CD4-positive, alpha-beta T cell (primary cell): ENCODE measurements at regions of chr4 and their contacts with region 1.

Region 1: GRCh38 chr4:26319467-26319948 is 1.3 kb upstream of the RBPJ start:
- DNase-seq: peak; percentile 93 to 100 (median 95)
- ATAC-seq: peak; percentile 65
- H3K4me3 ChIP-seq: peak overlapping the region; percentile 99
- H3K4me3 Mint-ChIP-seq: peak overlapping the region; percentile 100
- H3K27ac ChIP-seq: peak overlapping the region; percentile 84 to 96
- H3K27ac Mint-ChIP-seq: peak overlapping the region; percentile 99
- H3K4me1 ChIP-seq: peaks cover 36% of the 10 kb centered on the region
- H3K4me1 Mint-ChIP-seq: peaks cover 35% of the 10 kb centered on the region
- H3K27me3 ChIP-seq: no peaks in the 10 kb centered on the region
- H3K27me3 Mint-ChIP-seq: no peaks in the 10 kb centered on the region
- CTCF ChIP-seq: no peak

Region 2: DNA sequence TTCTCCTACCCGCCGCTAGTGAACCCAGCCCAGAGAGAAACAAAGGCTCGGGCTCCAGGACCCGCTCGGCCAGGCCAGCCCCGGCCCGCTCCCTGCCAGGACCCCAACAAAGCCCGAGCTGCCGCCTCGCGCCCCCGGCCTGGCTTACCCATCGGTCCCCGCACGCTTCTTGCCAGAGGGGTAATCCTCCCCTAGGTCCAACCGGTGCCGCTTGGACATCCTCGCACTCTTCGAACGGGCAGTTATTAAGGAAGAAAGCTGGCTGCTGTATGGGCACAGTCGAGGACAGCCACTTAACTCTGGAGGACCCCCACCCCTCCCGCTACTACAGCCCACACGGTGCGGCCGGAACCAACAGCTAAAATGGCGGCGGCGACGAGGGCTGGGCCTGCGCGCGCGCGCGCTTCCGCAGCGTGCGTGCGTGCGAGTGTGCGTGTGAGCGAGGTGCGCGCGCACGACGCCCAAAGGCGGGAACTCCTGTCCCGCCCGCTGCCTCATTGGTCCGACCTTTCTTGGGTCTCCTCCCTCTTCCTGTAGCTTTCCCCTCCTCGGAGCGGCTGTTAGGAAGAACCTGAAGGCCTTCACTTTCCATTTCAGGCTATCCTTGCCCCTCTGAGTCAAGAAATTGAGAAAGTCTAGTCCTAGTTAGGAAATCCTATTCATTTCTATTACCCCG is 1735.2 kb before region 1 on chr4 and contains the start of gene DHX15:
- CTCF ChIA-PET with region 1: no interaction called
- POLR2A ChIA-PET with region 1: interaction called, 4 read pairs
- intact Hi-C with region 1: loop called in 1 of 2 experiments (anchors 10 kb)
- DNase-seq: peak; percentile 83 to 99 (median 90)
- ATAC-seq: peak; percentile 93
- H3K4me3 ChIP-seq: peak within 1 kb of the TSS; percentile 95
- H3K4me3 Mint-ChIP-seq: peak within 1 kb of the TSS; percentile 96
- H3K27ac ChIP-seq: peak within 1 kb of the TSS; percentile 94 to 96
- H3K27ac Mint-ChIP-seq: peak within 1 kb of the TSS; percentile 86
- H3K4me1 ChIP-seq: peaks cover 28% of the 10 kb centered on the region
- H3K4me1 Mint-ChIP-seq: peaks cover 41% of the 10 kb centered on the region
- H3K27me3 ChIP-seq: no peaks in the 10 kb centered on the region
- H3K27me3 Mint-ChIP-seq: peaks cover 5% of the 10 kb centered on the region
- CTCF ChIP-seq: no peak
- total RNA-seq, gene DHX15: 208 to 209 TPM

Region 3: GRCh38 chr4:25312496-25313200 is 1006.9 kb before region 1 on chr4 and contains the start of gene ZCCHC4:
- CTCF ChIA-PET with region 1: interaction called, 6 read pairs
- POLR2A ChIA-PET with region 1: no interaction called
- intact Hi-C with region 1: loop called in 1 of 2 experiments (anchors 5 kb)
- DNase-seq: peak; percentile 79 to 96 (median 88)
- ATAC-seq: peak; percentile 99
- H3K4me3 ChIP-seq: peak within 1 kb of the TSS; percentile 70
- H3K4me3 Mint-ChIP-seq: peak within 1 kb of the TSS; percentile 97
- H3K27ac ChIP-seq: peak within 1 kb of the TSS; percentile 0 to 40
- H3K27ac Mint-ChIP-seq: peak within 1 kb of the TSS; percentile 90
- H3K4me1 ChIP-seq: peaks cover 13% of the 10 kb centered on the region
- H3K4me1 Mint-ChIP-seq: peaks cover 16% of the 10 kb centered on the region
- H3K27me3 ChIP-seq: peaks cover 0 to 3% of the 10 kb centered on the region in 2 experiments
- H3K27me3 Mint-ChIP-seq: peaks cover 14% of the 10 kb centered on the region
- CTCF ChIP-seq: peak; percentile 100
- total RNA-seq, gene ZCCHC4: 6.4 to 6.7 TPM

Region 4: GRCh38 chr4:25862411-25863346 is 456.8 kb before region 1 on chr4 and contains the start of gene SEL1L3:
- CTCF ChIA-PET with region 1: no interaction called
- POLR2A ChIA-PET with region 1: interaction called, 6 read pairs
- intact Hi-C with region 1: loop called in 1 of 2 experiments (anchors 10 kb)
- DNase-seq: peak in 12 of 14 experiments; percentile 30 to 74 (median 49)
- ATAC-seq: peak; percentile 38
- H3K4me3 ChIP-seq: peak within 1 kb of the TSS; percentile 76
- H3K4me3 Mint-ChIP-seq: peak within 1 kb of the TSS; percentile 95
- H3K27ac ChIP-seq: peak within 1 kb of the TSS; percentile 55 to 94
- H3K27ac Mint-ChIP-seq: peak within 1 kb of the TSS; percentile 89
- H3K4me1 ChIP-seq: peaks cover 44% of the 10 kb centered on the region
- H3K4me1 Mint-ChIP-seq: peaks cover 41% of the 10 kb centered on the region
- H3K27me3 ChIP-seq: no peaks in the 10 kb centered on the region
- H3K27me3 Mint-ChIP-seq: no peaks in the 10 kb centered on the region
- CTCF ChIP-seq: no peak
- total RNA-seq, gene SEL1L3: 34.9 to 36.5 TPM

Region 5: DNA sequence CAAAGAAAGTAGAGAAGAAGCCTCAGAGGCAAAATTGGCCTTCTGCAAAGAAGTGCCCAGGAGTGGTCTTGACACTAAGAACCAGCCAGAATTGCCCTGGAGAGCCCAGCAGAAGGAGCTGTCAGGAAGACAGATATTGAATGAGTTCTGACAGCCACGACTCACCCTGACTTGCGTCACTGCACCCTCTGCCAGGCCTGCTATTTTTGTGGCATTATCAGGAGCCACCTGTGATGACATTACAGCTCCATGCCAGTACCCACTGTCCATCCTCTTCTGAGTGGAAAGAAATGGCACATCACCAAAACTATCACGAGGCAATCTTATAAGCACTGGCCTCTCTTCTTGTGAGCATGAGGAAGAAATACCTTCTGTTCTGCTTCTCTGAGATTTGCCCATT is 337.8 kb before region 1 on chr4:
- CTCF ChIA-PET with region 1: no interaction called
- POLR2A ChIA-PET with region 1: no interaction called
- intact Hi-C with region 1: loop called in 1 of 2 experiments (anchors 10 kb)
- DNase-seq: no peak
- ATAC-seq: no peak
- H3K4me3 ChIP-seq: no peak overlapping the region
- H3K4me3 Mint-ChIP-seq: no peak overlapping the region
- H3K27ac ChIP-seq: no peak overlapping the region
- H3K27ac Mint-ChIP-seq: no peak overlapping the region
- H3K4me1 ChIP-seq: no peaks in the 10 kb centered on the region
- H3K4me1 Mint-ChIP-seq: no peaks in the 10 kb centered on the region
- H3K27me3 ChIP-seq: no peaks in the 10 kb centered on the region
- H3K27me3 Mint-ChIP-seq: no peaks in the 10 kb centered on the region
- CTCF ChIP-seq: no peak

Region 6: DNA sequence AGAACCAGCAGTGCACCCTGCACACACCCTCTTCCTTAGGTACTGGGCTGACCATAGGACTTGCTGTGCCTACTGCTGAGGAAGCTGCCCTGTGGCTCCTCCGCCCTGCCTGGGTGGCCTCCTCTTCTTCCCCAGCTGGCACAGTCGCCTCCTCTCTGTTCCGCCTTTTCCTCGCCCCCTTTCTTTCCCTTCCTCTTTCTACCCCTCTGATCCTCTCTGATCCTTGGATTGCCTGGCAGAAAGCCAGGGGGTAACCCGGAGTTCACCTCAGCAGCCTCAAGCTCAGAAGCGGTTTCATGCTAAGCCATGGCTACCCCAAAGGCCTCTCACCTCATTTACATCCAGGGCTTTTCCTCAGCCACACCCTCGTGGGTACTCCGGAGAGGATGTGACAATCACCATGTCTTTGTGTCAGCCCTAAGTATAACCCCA is 269.3 kb before region 1 on chr4:
- CTCF ChIA-PET with region 1: no interaction called
- POLR2A ChIA-PET with region 1: no interaction called
- intact Hi-C with region 1: no loop called
- DNase-seq: peak in 2 of 14 experiments; percentile 18 to 32
- ATAC-seq: no peak
- H3K4me3 ChIP-seq: no peak overlapping the region
- H3K4me3 Mint-ChIP-seq: no peak overlapping the region
- H3K27ac ChIP-seq: no peak overlapping the region
- H3K27ac Mint-ChIP-seq: no peak overlapping the region
- H3K4me1 ChIP-seq: no peaks in the 10 kb centered on the region
- H3K4me1 Mint-ChIP-seq: no peaks in the 10 kb centered on the region
- H3K27me3 ChIP-seq: no peaks in the 10 kb centered on the region
- H3K27me3 Mint-ChIP-seq: peaks cover 7% of the 10 kb centered on the region
- CTCF ChIP-seq: no peak

Region 7: GRCh38 chr4:26197018-26197779 is 122.3 kb before region 1 on chr4:
- CTCF ChIA-PET with region 1: no interaction called
- POLR2A ChIA-PET with region 1: interaction called, 22 read pairs
- intact Hi-C with region 1: loop called in 1 of 2 experiments (anchors 5 kb)
- DNase-seq: peak; percentile 11 to 89 (median 56)
- ATAC-seq: peak; percentile 82
- H3K4me3 ChIP-seq: peak overlapping the region; percentile 8
- H3K4me3 Mint-ChIP-seq: peak overlapping the region; percentile 57
- H3K27ac ChIP-seq: peak overlapping the region in 1 of 2 donors; percentile 18
- H3K27ac Mint-ChIP-seq: peak overlapping the region; percentile 73
- H3K4me1 ChIP-seq: peaks cover 41% of the 10 kb centered on the region
- H3K4me1 Mint-ChIP-seq: peaks cover 50% of the 10 kb centered on the region
- H3K27me3 ChIP-seq: no peaks in the 10 kb centered on the region
- H3K27me3 Mint-ChIP-seq: no peaks in the 10 kb centered on the region
- CTCF ChIP-seq: no peak

Region 8: DNA sequence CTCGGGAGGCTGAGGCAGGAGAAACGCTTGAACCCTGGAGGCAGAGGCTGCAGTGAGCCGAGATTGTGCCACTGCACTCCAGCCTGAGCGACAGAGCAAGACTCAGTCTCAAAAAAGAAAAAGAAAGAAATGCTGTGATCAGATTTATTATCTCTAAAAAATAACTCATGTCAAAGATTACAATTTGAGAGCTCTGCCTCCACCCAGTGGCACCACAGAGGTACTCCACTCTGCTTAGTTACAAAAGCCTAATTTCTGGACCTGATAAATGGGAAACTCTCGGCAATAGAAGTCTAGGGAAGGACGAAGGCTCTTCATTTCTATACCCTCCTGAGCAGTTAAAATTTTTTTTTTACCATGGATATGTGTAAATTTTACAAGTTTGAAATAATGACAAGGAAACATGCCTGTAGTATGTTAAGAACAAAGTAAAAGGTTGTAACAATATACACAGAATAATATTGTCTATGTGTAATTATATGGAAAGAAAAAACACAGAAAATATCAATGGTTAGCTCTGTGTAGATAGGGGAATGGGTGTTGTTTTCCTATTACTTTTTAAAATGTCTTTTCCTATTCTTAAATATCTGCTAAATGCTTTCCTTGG is 690.9 kb after region 1 on chr4:
- CTCF ChIA-PET with region 1: no interaction called
- POLR2A ChIA-PET with region 1: interaction called, 5 read pairs
- intact Hi-C with region 1: loop called in 1 of 2 experiments (anchors 10 kb)
- DNase-seq: peak; percentile 25 to 78 (median 56)
- ATAC-seq: peak; percentile 95
- H3K4me3 ChIP-seq: no peak overlapping the region
- H3K4me3 Mint-ChIP-seq: no peak overlapping the region
- H3K27ac ChIP-seq: no peak overlapping the region
- H3K27ac Mint-ChIP-seq: no peak overlapping the region
- H3K4me1 ChIP-seq: peaks cover 4% of the 10 kb centered on the region
- H3K4me1 Mint-ChIP-seq: peaks cover 17% of the 10 kb centered on the region
- H3K27me3 ChIP-seq: no peaks in the 10 kb centered on the region
- H3K27me3 Mint-ChIP-seq: no peaks in the 10 kb centered on the region
- CTCF ChIP-seq: peak; percentile 96

Region 9: GRCh38 chr4:27206009-27206408 is 886.5 kb after region 1 on chr4:
- CTCF ChIA-PET with region 1: no interaction called
- POLR2A ChIA-PET with region 1: no interaction called
- intact Hi-C with region 1: no loop called
- DNase-seq: no peak
- ATAC-seq: no peak
- H3K4me3 ChIP-seq: no peak overlapping the region
- H3K4me3 Mint-ChIP-seq: no peak overlapping the region
- H3K27ac ChIP-seq: no peak overlapping the region
- H3K27ac Mint-ChIP-seq: no peak overlapping the region
- H3K4me1 ChIP-seq: no peaks in the 10 kb centered on the region
- H3K4me1 Mint-ChIP-seq: no peaks in the 10 kb centered on the region
- H3K27me3 ChIP-seq: no peaks in the 10 kb centered on the region
- H3K27me3 Mint-ChIP-seq: no peaks in the 10 kb centered on the region
- CTCF ChIP-seq: no peak